HEK293 (cell line): ENCODE measurements at regions of chr15 and their contacts with region 1.

Region 1: DNA sequence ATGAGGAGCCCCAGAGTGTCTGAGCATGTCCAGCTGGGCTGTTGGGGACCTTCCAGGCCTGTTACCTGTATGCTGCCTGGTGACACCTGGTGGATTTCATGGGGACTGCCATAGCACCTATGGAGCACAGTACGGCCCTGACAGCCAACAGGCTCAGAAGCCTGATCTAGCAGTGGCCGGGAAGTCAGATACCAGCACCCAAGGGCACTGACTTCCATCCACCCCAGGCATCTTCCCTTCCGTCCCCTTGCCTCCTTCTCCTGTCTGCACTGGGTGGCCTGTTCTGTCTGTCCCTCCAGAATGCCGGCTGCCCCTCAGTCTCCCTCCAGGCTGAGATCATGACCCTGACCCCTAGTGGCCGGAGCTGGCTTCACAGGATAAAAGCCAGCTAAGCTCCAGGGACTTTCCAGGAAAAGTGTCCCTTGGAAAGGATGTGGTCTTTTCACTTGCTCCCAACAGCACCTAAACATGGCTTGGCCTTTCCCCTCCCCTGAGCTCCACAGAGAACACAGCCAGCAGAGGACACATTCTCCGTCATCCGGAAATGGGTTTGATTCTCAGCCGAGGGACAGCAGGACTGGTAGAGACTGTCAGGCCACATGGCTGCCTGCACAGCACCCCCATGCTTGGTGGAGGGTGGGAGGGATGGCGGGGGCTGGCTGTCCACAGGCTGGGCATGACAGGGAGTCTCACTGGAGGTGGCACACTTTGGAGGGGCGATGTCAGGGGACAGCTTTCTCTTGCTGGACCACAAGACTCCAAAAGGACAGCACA is 9.5 kb downstream of the RPS17 start:
- H3K4me3 ChIP-seq: peak overlapping the region; percentile 41
- H3K27ac ChIP-seq: no peak overlapping the region
- H3K4me1 ChIP-seq: no peaks in the 10 kb centered on the region
- CTCF ChIP-seq: peak; percentile 98

Region 2: DNA sequence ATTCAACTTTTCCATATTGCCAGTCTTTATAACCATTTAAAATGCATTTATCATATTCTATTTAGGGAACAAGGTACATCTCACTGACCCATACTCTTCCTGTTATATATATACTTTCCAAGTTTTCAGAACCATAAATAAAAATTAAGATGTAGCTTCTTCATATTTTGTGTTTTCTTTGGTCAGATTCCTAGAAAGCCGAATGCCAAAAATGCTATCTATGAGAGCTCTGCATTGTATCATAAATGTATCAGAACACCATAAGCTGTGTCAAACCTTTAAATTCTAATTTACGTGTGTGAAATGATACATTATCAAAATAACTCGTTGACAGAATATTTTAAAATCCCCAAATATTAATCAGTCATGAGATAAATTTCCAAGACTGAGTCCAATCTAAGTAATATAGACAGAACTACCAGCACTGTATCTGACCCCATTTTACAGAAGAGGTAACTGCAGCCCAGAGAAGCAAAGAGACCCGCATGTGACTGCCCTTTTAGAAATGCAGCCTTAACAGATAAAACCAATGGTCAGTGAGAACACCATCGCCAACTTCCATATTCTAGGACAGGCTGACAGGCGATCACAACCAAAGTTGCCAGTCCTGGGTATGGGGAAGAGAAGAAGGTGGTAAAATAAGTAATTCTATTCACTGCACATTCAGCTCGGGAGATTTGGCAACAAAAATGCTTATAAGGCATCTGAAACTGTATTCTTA is 25.7 kb after region 1 on chr15:
- CTCF ChIA-PET with region 1: interaction called, 12 read pairs
- POLR2A ChIA-PET with region 1: no interaction called
- H3K4me3 ChIP-seq: no peak overlapping the region
- H3K27ac ChIP-seq: no peak overlapping the region
- H3K4me1 ChIP-seq: no peaks in the 10 kb centered on the region
- CTCF ChIP-seq: no peak

Region 3: DNA sequence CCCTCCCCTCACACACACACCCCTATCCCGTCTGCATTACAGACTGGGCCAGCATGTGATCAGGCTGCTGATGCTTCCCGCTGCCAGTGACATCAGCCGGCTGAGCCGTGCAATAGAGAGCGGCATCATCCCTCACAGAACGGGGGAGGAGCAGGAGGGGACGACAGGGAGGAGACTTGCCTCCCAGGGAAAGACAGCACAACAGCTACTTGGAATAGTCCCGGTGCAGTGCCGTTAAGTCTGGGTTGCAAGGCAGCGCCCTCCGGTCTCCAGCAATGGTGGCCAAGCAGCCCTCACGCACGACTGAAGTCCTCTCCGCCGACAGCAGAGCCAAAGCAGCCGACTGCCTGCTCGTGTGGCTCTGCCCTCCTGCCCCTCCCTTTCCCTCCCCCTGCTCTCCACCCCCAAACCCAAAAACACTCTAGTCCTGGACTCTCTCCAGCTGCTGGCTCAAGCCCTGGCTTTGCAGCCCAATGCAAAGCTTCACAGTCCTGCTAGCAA is 41.0 kb after region 1 on chr15:
- CTCF ChIA-PET with region 1: interaction called, 10 read pairs
- POLR2A ChIA-PET with region 1: no interaction called
- H3K4me3 ChIP-seq: peak overlapping the region; percentile 32
- H3K27ac ChIP-seq: peak overlapping the region; percentile 11; the same call in 1 of the 2 replicates
- H3K4me1 ChIP-seq: peaks cover 5% of the 10 kb centered on the region
- CTCF ChIP-seq: no peak

Region 4: DNA sequence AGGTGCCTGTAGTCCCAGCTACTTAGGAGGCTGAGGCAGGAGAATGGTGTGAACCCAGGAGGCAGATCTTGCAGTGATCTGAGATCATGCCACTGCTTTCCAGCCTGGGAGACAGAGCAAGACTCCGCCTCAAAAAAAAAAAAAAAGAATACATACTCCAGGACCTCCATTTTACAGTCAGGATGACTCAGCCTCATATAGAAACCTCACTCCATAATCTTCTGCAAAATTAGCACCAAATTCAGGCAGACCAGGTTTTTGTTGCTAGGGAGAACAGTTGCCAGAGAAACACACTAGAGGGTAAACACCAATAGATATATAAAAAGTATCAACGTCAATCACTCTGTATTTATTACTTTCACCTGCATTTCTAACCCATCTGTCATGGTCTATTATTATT is 207.2 kb after region 1 on chr15:
- CTCF ChIA-PET with region 1: no interaction called
- POLR2A ChIA-PET with region 1: no interaction called
- H3K4me3 ChIP-seq: no peak overlapping the region
- H3K27ac ChIP-seq: no peak overlapping the region
- H3K4me1 ChIP-seq: no peaks in the 10 kb centered on the region
- CTCF ChIP-seq: no peak